ENCODE measurements at regions of chr11 and their contacts with region 1.

Region 1: GRCh38 chr11:3160252-3161031 is 4.7 kb downstream of the OSBPL5 start:
- DNase-seq: no peak
- H3K4me3 ChIP-seq: no peak overlapping the region
- H3K4me3 Mint-ChIP-seq: no peak overlapping the region
- H3K27ac Mint-ChIP-seq: no peak overlapping the region
- H3K4me1 ChIP-seq: no peaks in the 10 kb centered on the region
- H3K4me1 Mint-ChIP-seq: no peaks in the 10 kb centered on the region
- H3K27me3 ChIP-seq: no peaks in the 10 kb centered on the region
- H3K27me3 Mint-ChIP-seq: no peaks in the 10 kb centered on the region
- CTCF ChIP-seq: no peak

Region 2: DNA sequence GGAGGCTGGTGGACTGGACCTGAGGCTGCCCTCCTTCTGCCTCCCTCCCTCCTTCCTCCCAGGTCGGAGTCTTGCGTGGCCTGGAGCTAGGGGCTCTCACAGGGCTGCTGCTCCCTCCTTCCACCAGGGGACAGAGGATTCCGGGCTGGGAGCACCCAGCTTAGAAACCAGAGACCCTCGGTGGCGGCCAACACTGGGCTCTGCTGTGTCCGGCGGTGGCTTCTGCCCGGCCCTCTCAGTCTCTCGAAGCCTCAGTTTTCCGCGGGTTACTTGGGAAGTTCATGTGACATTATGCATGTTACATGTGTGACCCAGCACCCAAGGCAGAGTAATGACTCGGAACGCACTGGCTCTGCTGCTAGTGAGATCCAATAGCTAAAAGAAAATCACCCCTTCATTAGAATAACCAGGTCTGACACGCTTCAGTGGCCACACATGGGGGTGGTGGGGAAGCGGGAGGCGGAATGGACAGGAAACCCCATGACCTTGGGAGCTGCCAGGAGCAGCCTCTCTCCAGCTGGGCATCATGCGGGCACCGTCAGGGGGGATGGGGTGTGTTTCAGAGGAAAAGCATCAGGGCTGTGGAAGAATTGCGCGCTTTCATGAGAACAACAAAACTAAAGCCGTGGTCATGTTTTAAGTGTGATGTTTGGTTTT is 64.1 kb after region 1 on chr11:
- CTCF ChIA-PET with region 1: no interaction called
- POLR2A ChIA-PET with region 1: interaction called, 11 read pairs
- intact Hi-C with region 1: no loop called
- DNase-seq: no peak
- H3K4me3 ChIP-seq: no peak overlapping the region
- H3K4me3 Mint-ChIP-seq: no peak overlapping the region
- H3K27ac Mint-ChIP-seq: no peak overlapping the region
- H3K4me1 ChIP-seq: no peaks in the 10 kb centered on the region
- H3K4me1 Mint-ChIP-seq: no peaks in the 10 kb centered on the region
- H3K27me3 ChIP-seq: peaks cover 2% of the 10 kb centered on the region
- H3K27me3 Mint-ChIP-seq: peaks cover 31% of the 10 kb centered on the region
- CTCF ChIP-seq: no peak